ENCODE measurements at regions of chr11 and their contacts with region 1.

Region 1: DNA sequence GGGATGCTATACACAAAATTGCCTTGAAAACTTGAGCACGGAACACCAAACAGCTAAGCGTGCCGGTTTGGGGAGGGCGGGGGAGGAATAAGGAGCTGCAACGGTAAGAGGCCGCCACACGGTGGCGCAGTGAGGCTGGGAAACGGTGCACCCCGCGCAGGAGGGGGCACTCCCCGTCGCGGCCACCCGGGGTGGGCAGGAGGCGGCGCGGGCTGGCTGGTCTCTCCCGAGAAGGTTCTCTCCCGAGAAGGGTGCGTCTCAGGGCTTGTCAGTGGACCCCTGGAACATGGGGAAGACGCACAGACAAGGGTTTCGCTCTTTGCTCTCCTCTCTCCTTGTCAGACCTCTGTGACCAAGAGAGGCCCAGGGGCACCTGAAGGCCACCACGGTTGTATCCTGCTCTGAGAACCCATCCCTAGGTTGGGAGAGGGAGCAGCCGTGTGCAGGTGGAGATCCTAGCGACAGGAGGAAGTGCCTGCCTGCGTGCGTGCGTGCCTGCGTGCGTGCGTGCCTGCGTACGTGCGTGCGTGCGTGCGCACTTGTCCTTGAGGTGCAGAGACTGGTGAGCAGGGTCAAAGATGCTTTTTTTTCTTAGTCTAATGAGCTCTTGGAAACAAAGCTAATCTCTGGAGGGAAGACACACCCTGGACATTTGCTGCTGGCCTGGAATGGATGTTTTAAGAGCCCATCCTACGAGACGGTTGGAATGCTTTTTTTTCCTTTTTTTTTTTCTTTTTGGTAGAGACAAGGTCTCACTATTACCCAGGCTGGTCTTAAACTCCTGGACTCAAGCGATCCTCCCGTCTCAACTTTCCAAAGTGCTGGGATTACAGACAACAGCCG is 18.1 kb upstream of the JAM3 start:
- DNase-seq: peak; percentile 76
- ATAC-seq: peak; percentile 90

Region 2: DNA sequence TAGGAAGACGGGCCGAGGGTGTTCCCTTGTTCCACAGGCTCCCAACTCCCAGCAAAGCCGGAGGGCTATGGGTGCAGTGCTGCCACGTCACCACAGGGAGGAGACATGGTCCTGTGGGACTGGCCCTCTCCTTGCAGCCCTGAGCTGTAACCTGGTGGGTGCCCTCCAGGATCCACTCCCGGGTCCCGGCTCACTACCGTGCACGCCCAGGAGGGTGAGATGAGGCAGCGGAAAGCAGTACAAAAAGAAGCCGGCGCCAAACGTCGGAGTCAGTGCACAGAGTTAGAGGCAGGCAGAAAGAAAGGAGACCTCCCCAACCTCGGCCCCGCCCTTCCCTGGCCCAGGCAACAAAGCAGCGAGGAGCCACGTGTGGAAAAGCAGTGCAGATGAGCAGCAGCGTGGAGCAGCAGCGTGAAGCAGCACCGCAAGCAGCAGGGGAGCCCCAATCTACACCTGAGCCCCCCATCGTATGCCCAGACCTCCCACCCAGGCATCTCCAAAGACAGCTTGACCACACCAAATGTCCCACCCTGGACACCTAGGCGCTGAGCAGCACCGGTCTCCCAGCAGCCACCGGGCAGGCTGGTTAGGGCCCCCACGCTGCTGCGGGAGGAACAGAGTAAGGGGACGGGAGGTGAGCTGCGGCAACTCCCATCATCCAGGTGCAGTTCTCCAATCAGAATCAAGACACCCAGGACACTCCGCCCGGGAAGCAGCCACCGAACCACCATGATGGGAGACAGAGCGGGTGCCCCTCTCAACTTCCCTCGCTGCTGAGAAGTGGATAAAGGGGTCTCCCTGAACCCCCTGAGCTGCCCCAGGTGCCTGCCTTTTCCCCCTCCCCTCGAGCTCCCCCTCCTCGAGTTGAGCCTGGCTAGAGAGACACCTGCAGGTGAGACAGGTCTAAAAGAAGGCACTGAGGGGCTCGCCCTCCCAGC is 122.8 kb before region 1 on chr11:
- intact Hi-C with region 1: loop called (anchors 2 kb)
- DNase-seq: peak; percentile 78
- ATAC-seq: peak; percentile 80

Region 3: GRCh38 chr11:133966921-133967598 is 83.7 kb before region 1 on chr11:
- intact Hi-C with region 1: loop called (anchors 10 kb)
- DNase-seq: peak; percentile 79
- ATAC-seq: peak; percentile 89

Region 4: GRCh38 chr11:133988686-133989410 is 61.9 kb before region 1 on chr11:
- intact Hi-C with region 1: no loop called
- DNase-seq: peak; percentile 88
- ATAC-seq: peak; percentile 96

Region 5: DNA sequence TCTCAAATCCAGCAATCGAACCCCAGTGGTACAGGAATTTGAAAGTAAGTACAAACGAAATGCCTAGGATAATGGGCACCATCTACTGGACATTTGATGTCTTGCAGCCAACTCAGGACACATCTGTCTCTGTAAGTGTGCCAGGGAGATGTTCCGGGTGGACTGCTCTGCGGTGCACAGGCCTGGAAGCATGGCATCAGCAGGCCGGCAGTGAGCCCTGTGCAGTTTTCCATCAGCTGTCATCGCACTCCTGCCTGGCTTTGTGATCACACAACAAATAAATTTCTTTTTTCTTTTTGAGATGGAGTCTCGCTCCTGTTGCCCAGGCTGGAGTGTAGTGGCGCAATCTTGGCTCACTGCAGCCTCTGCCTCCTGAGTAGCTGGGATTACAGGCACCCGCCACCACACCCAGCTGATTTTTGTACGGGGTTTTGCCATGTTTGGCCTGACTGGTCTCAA is 89.1 kb after region 1 on chr11:
- intact Hi-C with region 1: loop called (anchors 2 kb)
- DNase-seq: no peak
- ATAC-seq: peak; percentile 94